GM12878 (cell line): ENCODE measurements at regions of chr13 and their contacts with region 1.

Region 1: DNA sequence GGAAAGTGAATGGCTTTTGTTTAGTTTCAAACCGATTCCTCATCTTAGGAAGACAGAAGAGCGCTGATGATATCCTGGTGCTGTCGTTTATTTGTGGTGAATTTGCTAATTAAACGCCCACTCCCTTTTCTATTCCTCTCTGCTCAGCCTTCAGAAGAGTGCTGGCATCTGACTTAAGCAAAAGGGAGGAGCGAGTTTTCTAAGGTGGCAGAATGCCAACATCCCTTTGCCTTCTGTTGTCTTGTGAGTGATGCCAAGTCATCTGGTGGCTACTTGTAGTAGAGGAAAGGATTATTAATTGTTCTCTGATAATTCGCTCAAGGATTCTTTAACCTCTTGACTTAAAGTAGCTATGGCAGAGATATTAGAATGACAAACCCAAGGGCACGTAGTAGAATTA is 68.1 kb downstream of the ERCC5 start:
- DNase-seq: no peak
- ATAC-seq: no peak
- H3K4me3 ChIP-seq: no peak overlapping the region
- H3K27ac ChIP-seq: no peak overlapping the region
- H3K4me1 ChIP-seq: no peaks in the 10 kb centered on the region
- H3K27me3 ChIP-seq: no peaks in the 10 kb centered on the region
- CTCF ChIP-seq: no peak
- EP300 ChIP-seq: no peak
- POLR2A ChIP-seq: no peak
- RAD21 ChIP-seq: no peak

Region 2: GRCh38 chr13:102870677-102871415 is 43.1 kb before region 1 on chr13:
- CTCF ChIA-PET with region 1: interaction called, 11 read pairs
- POLR2A ChIA-PET with region 1: no interaction called
- RAD21 ChIA-PET with region 1: interaction called, 7 read pairs
- SMC1A ChIA-PET with region 1: no interaction called
- in situ Hi-C with region 1: no loop called
- intact Hi-C with region 1: no loop called
- DNase-seq: no peak
- ATAC-seq: peak; percentile 95
- H3K4me3 ChIP-seq: no peak overlapping the region
- H3K27ac ChIP-seq: no peak overlapping the region
- H3K4me1 ChIP-seq: no peaks in the 10 kb centered on the region
- H3K27me3 ChIP-seq: no peaks in the 10 kb centered on the region
- CTCF ChIP-seq: peak; percentile 72 to 82 (median 73)
- EP300 ChIP-seq: no peak
- POLR2A ChIP-seq: no peak
- RAD21 ChIP-seq: peak; percentile 90

Region 3: GRCh38 chr13:103006641-103007426 is 92.9 kb after region 1 on chr13:
- CTCF ChIA-PET with region 1: no interaction called
- POLR2A ChIA-PET with region 1: no interaction called
- RAD21 ChIA-PET with region 1: no interaction called
- SMC1A ChIA-PET with region 1: interaction called, 6 read pairs
- in situ Hi-C with region 1: no loop called
- intact Hi-C with region 1: loop called (anchors 2 kb)
- DNase-seq: peak; percentile 74
- ATAC-seq: peak; percentile 95
- H3K4me3 ChIP-seq: no peak overlapping the region; the same call in 1 of the 2 replicates
- H3K27ac ChIP-seq: peak overlapping the region; percentile 87
- H3K4me1 ChIP-seq: peaks cover 15% of the 10 kb centered on the region
- H3K27me3 ChIP-seq: no peaks in the 10 kb centered on the region
- CTCF ChIP-seq: no peak
- EP300 ChIP-seq: peak; percentile 90 to 98
- POLR2A ChIP-seq: no peak
- RAD21 ChIP-seq: 0 out of 2 replicates have a peak, but pooled peaks have one; percentile 3

Region 4: DNA sequence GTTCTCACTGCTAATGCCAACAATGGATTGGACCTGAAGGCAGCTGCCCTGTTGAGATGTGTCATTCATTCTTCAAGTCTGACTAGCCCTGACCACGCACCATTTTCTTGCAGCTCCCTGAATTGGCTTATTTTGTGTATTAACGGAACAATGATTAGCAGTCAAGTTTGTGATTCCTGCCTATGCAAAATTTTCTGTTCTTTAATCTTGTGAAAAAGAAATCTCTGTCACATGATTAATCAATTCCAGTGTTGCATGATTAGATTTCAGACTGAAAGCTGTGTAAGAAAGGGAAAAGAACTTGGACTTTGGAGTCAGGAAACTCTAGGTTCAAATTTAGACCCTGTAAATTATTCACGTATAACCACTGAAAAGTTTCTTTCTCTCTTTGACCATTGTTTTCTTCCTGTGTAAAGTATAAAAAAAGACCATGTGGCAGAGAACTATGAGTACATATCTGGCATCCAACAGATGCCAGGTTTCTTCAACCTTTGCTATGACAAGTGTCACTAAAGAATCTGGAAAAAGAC is 216.8 kb after region 1 on chr13:
- CTCF ChIA-PET with region 1: interaction called, 16 read pairs
- POLR2A ChIA-PET with region 1: interaction called, 3 read pairs
- RAD21 ChIA-PET with region 1: interaction called, 20 read pairs
- SMC1A ChIA-PET with region 1: interaction called, 12 read pairs
- in situ Hi-C with region 1: no loop called
- intact Hi-C with region 1: no loop called
- DNase-seq: peak; percentile 71
- ATAC-seq: peak; percentile 89
- H3K4me3 ChIP-seq: 0 out of 2 replicates have a peak overlapping the region, but pooled peaks have one; percentile 6
- H3K27ac ChIP-seq: peak overlapping the region; percentile 55
- H3K4me1 ChIP-seq: peaks cover 17% of the 10 kb centered on the region
- H3K27me3 ChIP-seq: no peaks in the 10 kb centered on the region
- CTCF ChIP-seq: no peak
- EP300 ChIP-seq: peak; percentile 66 to 78; a peak in 1 of 4 replicates
- POLR2A ChIP-seq: no peak
- RAD21 ChIP-seq: no peak

Region 5: DNA sequence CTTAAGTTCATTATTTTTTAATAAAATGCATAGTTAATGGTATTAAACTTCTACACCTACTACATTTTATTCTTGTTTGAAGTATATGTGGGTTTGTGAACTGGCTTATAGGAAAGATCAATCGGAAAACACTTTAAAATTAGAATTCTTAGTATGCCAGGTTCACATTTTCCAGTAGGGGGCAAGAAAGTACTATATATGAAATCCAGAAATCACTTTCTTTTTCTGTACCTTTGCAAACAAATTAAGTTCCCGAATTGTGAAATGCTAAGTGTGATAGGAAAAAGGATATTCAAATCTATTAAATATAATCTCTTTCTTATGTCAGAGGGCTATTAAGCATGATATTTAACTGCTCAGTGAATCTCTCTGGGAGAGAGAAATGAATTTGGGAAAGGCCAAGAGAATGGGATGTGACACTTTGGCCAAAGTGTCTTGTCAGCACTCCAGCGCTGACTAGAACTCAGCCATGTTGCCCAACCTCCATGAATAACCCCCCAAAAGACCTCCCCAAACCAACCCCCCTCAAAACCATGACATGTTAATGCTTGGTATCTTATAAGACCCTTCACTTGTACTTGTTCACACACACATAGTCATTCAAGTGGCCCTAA is 274.9 kb after region 1 on chr13:
- CTCF ChIA-PET with region 1: interaction called, 20 read pairs
- POLR2A ChIA-PET with region 1: no interaction called
- RAD21 ChIA-PET with region 1: interaction called, 7 read pairs
- SMC1A ChIA-PET with region 1: interaction called, 14 read pairs
- in situ Hi-C with region 1: loop called (anchors 5 kb)
- intact Hi-C with region 1: loop called (anchors 2 kb)
- DNase-seq: no peak
- ATAC-seq: peak; percentile 64
- H3K4me3 ChIP-seq: no peak overlapping the region
- H3K27ac ChIP-seq: no peak overlapping the region
- H3K4me1 ChIP-seq: peaks cover 5% of the 10 kb centered on the region
- H3K27me3 ChIP-seq: no peaks in the 10 kb centered on the region
- CTCF ChIP-seq: peak; percentile 34 to 71 (median 53); a peak in 5 of 6 replicates
- EP300 ChIP-seq: no peak
- POLR2A ChIP-seq: no peak
- RAD21 ChIP-seq: peak; percentile 77

Region 6: DNA sequence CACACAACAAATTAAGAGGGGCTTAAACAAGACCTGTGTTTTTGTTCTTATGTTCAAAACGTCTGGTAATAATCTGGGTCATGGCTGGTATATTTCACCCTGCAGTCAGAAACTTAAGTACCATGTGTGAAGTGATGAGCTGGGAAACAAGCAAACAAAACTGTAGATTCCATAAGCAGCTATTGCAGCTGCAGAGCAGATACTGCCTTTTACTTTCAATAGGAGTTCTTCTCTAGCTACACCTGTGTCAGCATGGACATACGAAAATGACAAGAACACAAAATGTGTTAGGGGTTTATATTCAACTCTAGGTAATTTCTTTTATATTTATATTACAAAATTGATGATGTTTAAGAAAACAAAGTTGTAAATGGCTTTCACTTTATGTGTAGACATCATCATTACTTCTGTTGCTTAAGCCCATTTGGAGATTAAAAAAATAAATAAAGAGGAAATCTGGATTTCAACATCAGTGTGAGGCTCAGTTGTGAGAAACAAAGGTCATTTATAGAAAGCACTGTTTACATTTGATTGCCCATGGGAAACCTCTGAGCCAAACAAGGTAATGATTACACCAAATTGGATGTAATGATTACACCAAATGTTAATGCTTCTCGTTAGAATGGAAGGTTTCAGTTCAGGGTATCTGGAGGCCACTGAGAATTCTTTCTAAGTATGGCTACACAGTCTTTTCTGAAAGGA is 603.3 kb after region 1 on chr13:
- CTCF ChIA-PET with region 1: no interaction called
- POLR2A ChIA-PET with region 1: no interaction called
- RAD21 ChIA-PET with region 1: no interaction called
- SMC1A ChIA-PET with region 1: no interaction called
- in situ Hi-C with region 1: no loop called
- intact Hi-C with region 1: loop called (anchors 10 kb)
- DNase-seq: peak; percentile 57
- ATAC-seq: peak; percentile 85
- H3K4me3 ChIP-seq: no peak overlapping the region
- H3K27ac ChIP-seq: no peak overlapping the region
- H3K4me1 ChIP-seq: no peaks in the 10 kb centered on the region
- H3K27me3 ChIP-seq: no peaks in the 10 kb centered on the region
- CTCF ChIP-seq: no peak
- EP300 ChIP-seq: 0 out of 4 replicates have a peak, but pooled peaks of 1 of the 2 experiments have one; percentile 54
- POLR2A ChIP-seq: no peak
- RAD21 ChIP-seq: no peak